Activated CD4-positive, alpha-beta memory T cell treated with anti-CD3 and anti-CD28 coated beads for 36 hours (primary cell): ENCODE measurements at regions of chr6 and their contacts with region 1.

Region 1: GRCh38 chr6:35731736-35732532 is 4.9 kb upstream of the ARMC12 start:
- DNase-seq: peak; percentile 97
- H3K4me3 Mint-ChIP-seq: peak overlapping the region; percentile 81
- H3K27ac Mint-ChIP-seq: peak overlapping the region; percentile 89
- H3K4me1 Mint-ChIP-seq: peaks cover 78% of the 10 kb centered on the region
- H3K27me3 Mint-ChIP-seq: no peaks in the 10 kb centered on the region

Region 2: GRCh38 chr6:35522660-35523658 is 209.0 kb before region 1 on chr6:
- CTCF ChIA-PET with region 1: interaction called, 125 read pairs
- POLR2A ChIA-PET with region 1: interaction called, 4 read pairs
- intact Hi-C with region 1: loop called (anchors 1 kb)
- DNase-seq: peak; percentile 87
- H3K4me3 Mint-ChIP-seq: peak overlapping the region; percentile 67
- H3K27ac Mint-ChIP-seq: no peak overlapping the region
- H3K4me1 Mint-ChIP-seq: peaks cover 8% of the 10 kb centered on the region
- H3K27me3 Mint-ChIP-seq: no peaks in the 10 kb centered on the region

Region 3: DNA sequence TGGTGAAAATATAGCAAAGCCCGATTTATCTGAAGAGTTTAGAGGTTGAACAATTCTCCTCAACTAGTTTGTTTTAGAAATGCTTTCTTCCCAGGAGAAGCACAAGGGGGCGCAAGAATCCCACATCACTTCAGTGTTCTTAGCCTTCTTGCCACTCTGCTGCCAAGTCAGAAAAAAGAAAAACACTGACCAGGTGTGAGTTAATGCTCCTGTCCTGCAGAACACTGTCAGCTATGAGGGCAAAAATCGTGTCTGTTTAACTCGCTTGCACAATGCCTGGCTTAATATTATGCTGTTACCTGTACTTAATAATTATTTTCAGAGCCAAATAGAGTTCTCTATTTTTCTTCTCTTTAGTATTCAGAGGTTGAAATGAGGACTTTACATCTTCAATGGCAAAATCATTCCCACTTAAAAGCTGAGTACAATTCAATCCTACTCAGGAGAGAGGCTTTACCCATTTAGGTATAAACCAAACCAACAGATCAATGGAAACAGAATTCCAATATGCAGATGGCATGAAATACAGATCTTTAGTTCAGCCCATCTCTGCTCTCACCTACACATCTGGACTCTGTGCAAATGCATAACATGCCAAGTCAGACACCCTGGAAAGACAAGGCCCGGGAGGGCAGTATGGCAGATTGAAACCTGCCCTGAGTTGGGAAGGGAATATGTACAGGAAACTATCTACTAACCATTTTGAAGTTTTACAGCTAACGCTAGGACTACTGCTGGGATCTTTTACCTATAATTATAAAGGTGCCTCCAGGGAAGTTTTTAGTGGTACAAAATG is 147.8 kb before region 1 on chr6:
- CTCF ChIA-PET with region 1: interaction called, 210 read pairs
- POLR2A ChIA-PET with region 1: interaction called, 4 read pairs
- intact Hi-C with region 1: loop called (anchors 1 kb)
- DNase-seq: peak; percentile 80
- H3K4me3 Mint-ChIP-seq: no peak overlapping the region
- H3K27ac Mint-ChIP-seq: peak overlapping the region; percentile 26
- H3K4me1 Mint-ChIP-seq: peaks cover 54% of the 10 kb centered on the region
- H3K27me3 Mint-ChIP-seq: no peaks in the 10 kb centered on the region

Region 4: DNA sequence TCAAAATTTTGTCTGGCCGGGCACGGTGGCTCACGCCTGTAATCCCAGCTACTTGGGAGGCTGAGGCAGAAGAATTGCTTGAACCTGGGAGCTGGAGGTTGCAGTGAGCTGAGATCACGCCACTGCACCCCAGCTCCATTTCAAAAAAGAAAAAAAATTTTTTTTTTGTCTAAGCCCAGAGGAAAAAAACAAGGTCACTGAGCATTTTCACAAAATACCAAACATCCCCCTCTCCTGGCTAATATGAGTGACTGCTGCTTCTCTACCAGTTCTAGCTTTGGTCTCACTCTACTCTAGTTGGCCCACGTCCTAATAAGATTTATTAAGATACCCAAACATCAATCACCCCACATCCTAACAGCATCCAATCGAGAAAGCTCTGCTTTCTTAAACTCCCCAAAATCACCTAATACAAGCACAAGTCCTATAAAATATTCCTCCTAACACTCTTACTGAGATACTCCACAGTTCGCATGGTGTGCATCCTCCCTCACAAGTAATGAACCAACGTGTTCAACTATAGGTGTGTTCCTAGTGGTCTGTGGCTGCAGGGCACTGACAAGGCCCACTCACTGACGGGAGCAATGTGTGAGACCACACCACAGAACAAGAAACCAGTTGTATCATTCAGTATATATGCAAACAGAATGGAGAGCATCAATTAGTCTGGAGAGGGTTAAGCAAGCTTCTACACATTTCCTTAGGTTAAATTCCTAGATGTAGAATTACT is 107.4 kb before region 1 on chr6:
- CTCF ChIA-PET with region 1: interaction called, 53 read pairs
- POLR2A ChIA-PET with region 1: no interaction called
- intact Hi-C with region 1: no loop called
- DNase-seq: no peak
- H3K4me3 Mint-ChIP-seq: no peak overlapping the region
- H3K27ac Mint-ChIP-seq: peak overlapping the region; percentile 43
- H3K4me1 Mint-ChIP-seq: peaks cover 25% of the 10 kb centered on the region
- H3K27me3 Mint-ChIP-seq: no peaks in the 10 kb centered on the region

Region 5: GRCh38 chr6:35663447-35664235 is 68.3 kb before region 1 on chr6:
- CTCF ChIA-PET with region 1: interaction called, 22 read pairs
- POLR2A ChIA-PET with region 1: interaction called, 4 read pairs
- intact Hi-C with region 1: loop called (anchors 2 kb)
- DNase-seq: no peak
- H3K4me3 Mint-ChIP-seq: no peak overlapping the region
- H3K27ac Mint-ChIP-seq: no peak overlapping the region
- H3K4me1 Mint-ChIP-seq: peaks cover 21% of the 10 kb centered on the region
- H3K27me3 Mint-ChIP-seq: no peaks in the 10 kb centered on the region

Region 6: GRCh38 chr6:35710241-35710847 is 21.6 kb before region 1 on chr6:
- CTCF ChIA-PET with region 1: interaction called, 42 read pairs
- POLR2A ChIA-PET with region 1: interaction called, 11 read pairs
- intact Hi-C with region 1: loop called (anchors 1 kb)
- DNase-seq: peak; percentile 76
- H3K4me3 Mint-ChIP-seq: no peak overlapping the region
- H3K27ac Mint-ChIP-seq: peak overlapping the region; percentile 87
- H3K4me1 Mint-ChIP-seq: peaks cover 23% of the 10 kb centered on the region
- H3K27me3 Mint-ChIP-seq: no peaks in the 10 kb centered on the region

Region 7: GRCh38 chr6:35786810-35787209 is 54.9 kb after region 1 on chr6:
- CTCF ChIA-PET with region 1: no interaction called
- POLR2A ChIA-PET with region 1: no interaction called
- intact Hi-C with region 1: no loop called
- DNase-seq: no peak
- H3K4me3 Mint-ChIP-seq: no peak overlapping the region
- H3K27ac Mint-ChIP-seq: no peak overlapping the region
- H3K4me1 Mint-ChIP-seq: no peaks in the 10 kb centered on the region
- H3K27me3 Mint-ChIP-seq: peaks cover 42% of the 10 kb centered on the region

Region 8: DNA sequence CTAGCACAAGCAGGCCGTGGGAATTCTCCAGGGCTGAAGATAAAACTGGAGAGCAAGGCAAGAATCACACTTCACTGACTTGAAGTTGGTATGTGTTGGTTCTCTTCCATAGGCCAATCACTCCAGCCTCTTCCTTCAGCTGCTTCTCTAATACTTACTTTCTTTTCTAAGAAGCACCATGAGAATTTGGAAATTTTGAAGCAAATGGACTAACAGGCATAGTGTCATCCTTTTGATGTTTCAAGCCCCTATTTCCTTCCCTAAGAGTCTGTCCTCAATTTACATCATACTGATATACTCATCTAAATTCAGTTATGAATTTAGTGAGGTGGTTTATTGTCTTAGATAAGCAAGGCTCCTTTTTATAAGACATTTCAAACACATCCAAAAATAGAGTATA is 268.5 kb after region 1 on chr6:
- CTCF ChIA-PET with region 1: no interaction called
- POLR2A ChIA-PET with region 1: no interaction called
- intact Hi-C with region 1: no loop called
- DNase-seq: no peak
- H3K4me3 Mint-ChIP-seq: no peak overlapping the region
- H3K27ac Mint-ChIP-seq: no peak overlapping the region
- H3K4me1 Mint-ChIP-seq: no peaks in the 10 kb centered on the region
- H3K27me3 Mint-ChIP-seq: no peaks in the 10 kb centered on the region